Mucosa of descending colon (tissue), 3 donors: ENCODE measurements at regions of chr4 and their contacts with region 1.

Region 1: DNA sequence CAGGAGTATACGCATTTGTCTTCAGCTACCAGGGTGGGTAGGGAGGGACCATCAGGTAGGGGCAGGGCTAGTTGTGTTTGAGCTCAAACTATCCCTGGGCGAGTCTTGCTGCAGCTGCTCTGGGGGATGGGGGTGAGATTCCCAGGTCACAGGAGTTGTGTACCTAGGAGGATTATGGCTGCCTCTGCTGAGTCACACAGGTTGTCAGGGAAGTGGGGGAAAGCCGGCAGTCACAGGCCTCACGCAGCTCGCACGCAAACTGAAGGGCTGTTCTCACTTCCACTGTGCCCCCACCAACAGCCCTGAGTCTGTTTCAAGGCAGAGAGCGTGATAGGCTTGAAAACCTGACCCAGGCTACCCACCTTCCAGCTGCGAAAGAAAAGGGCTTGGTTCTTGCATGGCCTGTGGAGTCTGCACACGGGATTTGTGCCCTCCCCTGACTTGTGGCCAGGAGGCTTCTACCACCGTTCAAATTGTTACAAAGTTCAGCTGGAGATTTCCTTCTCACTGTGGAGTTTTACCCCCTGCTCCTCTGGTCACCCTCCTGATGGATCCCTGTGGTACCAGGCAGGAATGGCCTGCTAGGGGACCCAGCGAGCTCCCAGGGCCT is 63.8 kb downstream of the ARFIP1 start:
- DNase-seq: peak; percentile 48 to 65 (median 60)
- ATAC-seq: peak; percentile 91
- H3K4me3 ChIP-seq: no peak overlapping the region
- H3K4me1 ChIP-seq: no peaks in the 10 kb centered on the region
- CTCF ChIP-seq: no peak

Region 2: DNA sequence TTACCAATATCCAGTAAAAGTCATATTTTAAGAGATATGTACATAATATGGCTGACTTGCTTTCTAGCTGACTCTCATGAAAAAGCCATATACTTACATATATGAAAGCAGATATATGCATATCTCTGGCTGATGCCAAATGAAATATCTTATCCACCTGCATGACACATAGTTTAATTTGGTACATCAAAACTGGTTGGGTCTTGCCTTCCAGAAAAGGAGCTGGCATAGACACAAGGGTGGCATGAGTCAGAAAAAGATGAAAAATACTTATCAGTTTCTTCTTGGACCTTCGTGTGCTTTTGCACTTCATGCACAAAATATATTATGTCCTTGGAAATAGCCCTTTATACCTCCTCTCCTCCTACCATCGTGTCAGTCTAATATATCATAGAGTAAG is 96.1 kb before region 1 on chr4:
- intact Hi-C with region 1: no loop called
- DNase-seq: no peak
- ATAC-seq: no peak
- H3K4me3 ChIP-seq: no peak overlapping the region
- H3K4me1 ChIP-seq: no peaks in the 10 kb centered on the region
- CTCF ChIP-seq: no peak

Region 3: GRCh38 chr4:153083447-153083947 is 239.9 kb after region 1 on chr4:
- intact Hi-C with region 1: loop called (anchors 10 kb)
- DNase-seq: peak in 2 of 3 donors; percentile 58 to 81
- ATAC-seq: peak; percentile 94
- H3K4me3 ChIP-seq: no peak overlapping the region
- H3K4me1 ChIP-seq: peaks cover 5% of the 10 kb centered on the region
- CTCF ChIP-seq: peak; percentile 21

Region 4: GRCh38 chr4:153127760-153128494 is 284.3 kb after region 1 on chr4:
- intact Hi-C with region 1: loop called in 1 of 2 experiments (anchors 10 kb)
- DNase-seq: peak; percentile 69 to 95 (median 74)
- ATAC-seq: peak; percentile 94
- H3K4me3 ChIP-seq: no peak overlapping the region
- H3K4me1 ChIP-seq: peaks cover 3% of the 10 kb centered on the region
- CTCF ChIP-seq: peak; percentile 68